HEK293T (cell line): ENCODE measurements at regions of chr1 and their contacts with region 1.

Region 1: GRCh38 chr1:44775078-44775929 is at the start of gene RPS8:
- DNase-seq: peak; percentile 84

Region 2: DNA sequence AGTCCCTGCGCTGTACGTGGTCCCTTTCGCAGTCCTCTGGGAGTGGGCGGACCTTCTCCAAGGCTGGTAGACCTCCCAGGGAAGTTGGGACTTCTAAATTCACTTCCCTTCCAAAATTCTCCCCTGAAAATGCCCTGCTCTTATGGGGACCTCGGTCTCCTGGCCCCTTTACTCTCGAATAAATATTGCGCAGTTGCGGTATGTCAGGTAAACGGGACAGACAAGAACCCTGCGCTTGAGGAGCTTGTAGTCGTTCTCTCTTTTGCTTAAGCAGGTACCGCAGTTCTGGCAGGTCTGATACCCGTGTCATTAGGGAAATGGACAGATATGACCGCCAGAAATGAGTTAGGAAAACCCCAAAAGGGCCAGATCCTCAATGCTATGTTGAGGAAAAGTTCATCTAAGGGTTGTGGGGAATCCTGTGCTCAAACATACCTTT is 35.1 kb before region 1 on chr1:
- CTCF ChIA-PET with region 1: interaction called, 3 read pairs
- POLR2A ChIA-PET with region 1: interaction called, 13 read pairs
- DNase-seq: no peak

Region 3: GRCh38 chr1:44757420-44757819 is 17.9 kb before region 1 on chr1:
- CTCF ChIA-PET with region 1: no interaction called
- POLR2A ChIA-PET with region 1: interaction called, 19 read pairs
- DNase-seq: no peak

Region 4: GRCh38 chr1:44792783-44793714 is 17.7 kb after region 1 on chr1:
- CTCF ChIA-PET with region 1: no interaction called
- POLR2A ChIA-PET with region 1: interaction called, 52 read pairs
- DNase-seq: no peak

Region 5: DNA sequence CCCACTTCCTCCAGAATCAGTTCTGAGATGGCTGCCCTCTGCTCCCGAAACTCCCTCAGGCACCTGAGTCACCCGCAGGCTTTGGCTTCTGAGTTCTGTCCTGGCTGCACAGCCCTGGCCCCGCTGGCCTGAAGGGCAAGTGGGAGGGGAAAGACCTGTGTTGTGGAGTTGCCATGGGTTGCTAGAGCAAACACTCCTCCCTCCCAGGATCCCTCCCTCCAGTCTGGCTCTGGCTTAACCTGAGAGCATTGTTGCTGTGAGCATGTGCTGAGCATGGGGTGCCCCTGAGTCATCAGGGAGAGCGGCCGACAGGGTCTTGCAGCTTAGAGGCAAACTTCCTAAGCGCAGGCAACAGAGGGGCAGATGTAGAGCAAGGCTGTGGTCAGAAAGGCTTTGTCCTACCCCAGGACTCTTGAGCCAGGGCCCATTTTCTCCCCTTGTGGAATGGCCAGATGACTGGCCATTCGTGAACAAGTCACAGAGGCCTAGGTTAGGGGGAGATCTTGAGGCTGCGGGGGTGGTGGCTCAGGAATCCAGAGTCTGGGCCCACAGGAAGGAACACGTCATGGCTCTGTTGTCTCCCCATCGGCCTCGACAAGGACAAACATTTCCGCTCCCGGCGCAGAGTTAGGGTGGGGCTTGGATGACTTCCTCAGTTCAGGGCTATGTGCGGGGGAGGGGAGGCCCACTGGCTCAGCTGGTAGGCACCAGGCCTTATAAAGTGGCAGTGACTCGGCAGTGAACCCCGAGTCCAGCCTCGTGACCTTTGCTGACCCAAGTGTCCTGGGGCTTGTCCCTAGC is 32.2 kb after region 1 on chr1 and contains the start of gene DYNLT4:
- CTCF ChIA-PET with region 1: no interaction called
- POLR2A ChIA-PET with region 1: interaction called, 22 read pairs
- DNase-seq: no peak